Activated T-helper 1 cell treated with anti-CD3 and anti-CD28 coated beads, Interleukin-12 subunit alpha, Interleukin-12 subunit beta, Interleukin-2, Interleukin-4 antibody, amounts not matched to agents 30 ng/mL and 10 ng/mL and 1 ng/mL, durations not matched to agents 14 hours and 24 hours and 36 hours (primary cell): ENCODE measurements at regions of chr5 and their contacts with region 1.

Region 1: GRCh38 chr5:148383564-148384379 is at the start of gene FBXO38:
- DNase-seq: peak; percentile 95
- H3K4me3 Mint-ChIP-seq: peak within 1 kb of the TSS; percentile 94
- H3K27ac Mint-ChIP-seq: peak within 1 kb of the TSS; percentile 99
- H3K4me1 Mint-ChIP-seq: peaks cover 72% of the 10 kb centered on the region
- H3K27me3 Mint-ChIP-seq: no peaks in the 10 kb centered on the region
- total RNA-seq, gene FBXO38: 64.3 and 80.3 TPM in 2 replicates

Region 2: DNA sequence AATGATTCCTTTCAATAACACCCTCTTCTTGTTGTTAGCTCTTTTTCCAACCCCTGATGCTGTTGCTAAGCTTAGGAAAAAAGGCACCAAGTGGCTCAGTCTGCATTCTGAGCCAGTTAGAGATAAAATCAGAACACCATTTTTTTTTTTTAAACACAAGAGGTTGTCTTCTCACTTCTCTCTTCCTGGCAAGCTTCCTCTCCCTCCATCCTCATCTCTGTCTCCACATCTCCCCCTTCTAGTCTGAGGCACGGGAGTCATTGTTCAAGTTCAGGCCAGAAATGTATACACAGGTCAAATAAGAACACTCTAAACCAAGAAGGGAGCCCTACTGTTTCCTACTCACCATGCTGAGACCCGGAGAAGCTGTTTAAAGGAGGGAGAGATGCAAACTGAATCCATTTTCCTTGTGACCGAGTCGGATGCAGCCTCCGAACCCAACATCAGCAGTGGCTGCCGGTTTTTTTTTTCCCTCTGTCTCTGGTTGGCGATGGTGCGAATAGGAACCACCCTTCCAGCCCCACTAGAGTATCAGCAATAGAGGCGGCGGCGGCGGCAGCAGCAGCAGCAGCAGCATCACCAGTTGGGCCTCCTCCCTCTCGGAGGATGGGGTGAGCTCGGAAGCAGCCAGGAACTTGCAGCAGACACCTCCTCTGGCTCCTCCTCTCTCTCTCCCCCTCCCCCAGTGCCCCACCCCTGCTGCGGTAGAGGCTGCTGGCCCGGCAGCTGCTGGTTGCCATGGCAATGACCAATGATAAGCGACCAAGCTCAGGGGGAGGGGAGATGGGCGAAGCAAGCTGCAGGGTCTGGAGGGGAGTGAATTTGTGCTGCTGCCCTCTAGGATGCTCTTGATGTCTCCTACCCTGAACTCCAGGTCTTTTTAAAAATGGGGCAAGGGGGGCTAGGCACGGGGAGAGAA is 601.4 kb before region 1 on chr5 and contains the start of gene JAKMIP2:
- intact Hi-C with region 1: loop called (anchors 5 kb)
- DNase-seq: peak; percentile 83
- H3K4me3 Mint-ChIP-seq: peak within 1 kb of the TSS; percentile 87
- H3K27ac Mint-ChIP-seq: peak within 1 kb of the TSS; percentile 78
- H3K4me1 Mint-ChIP-seq: peaks cover 24% of the 10 kb centered on the region
- H3K27me3 Mint-ChIP-seq: peaks cover 13% of the 10 kb centered on the region
- total RNA-seq, gene JAKMIP2: 1.1 TPM in 2 replicates

Region 3: GRCh38 chr5:148163345-148163744 is 220.4 kb before region 1 on chr5:
- intact Hi-C with region 1: no loop called
- DNase-seq: no peak
- H3K4me3 Mint-ChIP-seq: no peak overlapping the region
- H3K27ac Mint-ChIP-seq: no peak overlapping the region
- H3K4me1 Mint-ChIP-seq: no peaks in the 10 kb centered on the region
- H3K27me3 Mint-ChIP-seq: peaks cover 1% of the 10 kb centered on the region

Region 4: DNA sequence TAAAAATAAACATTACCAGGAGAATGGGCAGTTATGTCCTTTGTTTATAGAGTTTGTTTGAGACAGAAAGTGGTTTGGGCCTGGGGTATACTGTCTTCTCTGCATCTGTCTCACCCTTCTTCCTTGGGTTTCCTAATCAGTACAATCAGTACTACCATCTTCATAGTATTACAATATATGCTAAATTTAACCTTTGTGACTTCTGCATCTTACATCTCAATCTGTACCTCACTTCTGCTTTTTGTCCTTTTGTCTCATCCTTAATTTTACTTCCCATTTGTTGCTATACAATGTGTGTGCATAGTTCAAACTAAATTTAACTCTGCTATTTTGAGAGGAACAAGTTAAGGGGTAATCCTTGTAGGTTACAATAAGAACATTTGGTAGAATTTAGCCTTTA is 19.6 kb after region 1 on chr5:
- intact Hi-C with region 1: loop called (anchors 1 kb)
- DNase-seq: no peak
- H3K4me3 Mint-ChIP-seq: no peak overlapping the region
- H3K27ac Mint-ChIP-seq: peak overlapping the region; percentile 23
- H3K4me1 Mint-ChIP-seq: peaks cover 34% of the 10 kb centered on the region
- H3K27me3 Mint-ChIP-seq: no peaks in the 10 kb centered on the region

Region 5: DNA sequence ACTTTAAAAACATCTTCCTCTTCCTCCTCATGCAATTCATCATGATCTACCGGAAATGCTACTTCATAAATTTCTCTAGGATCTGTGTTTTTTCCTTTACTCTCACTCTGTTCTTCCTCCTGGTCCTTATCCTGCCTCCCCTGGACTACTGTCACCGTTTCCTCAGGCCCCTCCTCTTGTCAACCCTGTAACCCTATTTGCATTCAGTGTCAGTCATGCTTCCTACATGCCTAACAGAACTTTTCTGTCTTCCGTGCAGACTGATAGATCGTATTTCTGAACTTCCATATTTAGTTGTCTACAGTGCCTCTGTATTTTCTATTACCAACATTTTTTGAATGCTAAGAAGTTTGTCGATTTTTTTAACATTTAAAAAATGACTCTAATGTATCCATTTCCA is 243.2 kb after region 1 on chr5:
- intact Hi-C with region 1: no loop called
- DNase-seq: no peak
- H3K4me3 Mint-ChIP-seq: no peak overlapping the region
- H3K27ac Mint-ChIP-seq: no peak overlapping the region
- H3K4me1 Mint-ChIP-seq: peaks cover 5% of the 10 kb centered on the region
- H3K27me3 Mint-ChIP-seq: peaks cover 19% of the 10 kb centered on the region

Region 6: DNA sequence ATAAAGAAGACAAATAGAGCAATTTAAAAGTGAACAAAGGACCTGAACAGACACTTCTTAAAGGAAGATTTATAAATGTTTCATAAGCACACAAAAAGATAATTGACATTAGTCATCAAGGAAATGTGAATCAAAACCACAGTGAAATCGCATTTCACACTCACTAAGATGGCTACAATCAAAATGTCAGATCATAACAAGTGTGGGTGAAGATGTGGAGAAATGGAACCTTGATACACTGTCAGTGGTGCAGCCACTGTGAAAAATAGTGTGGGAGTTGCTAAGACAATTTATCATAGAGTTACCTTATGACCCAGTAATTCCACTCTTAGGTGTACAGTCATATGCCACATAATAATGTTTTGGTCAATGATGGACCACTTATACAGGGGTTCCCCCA is 325.1 kb after region 1 on chr5:
- intact Hi-C with region 1: loop called (anchors 1 kb)
- DNase-seq: no peak
- H3K4me3 Mint-ChIP-seq: no peak overlapping the region
- H3K27ac Mint-ChIP-seq: no peak overlapping the region
- H3K4me1 Mint-ChIP-seq: peaks cover 8% of the 10 kb centered on the region
- H3K27me3 Mint-ChIP-seq: no peaks in the 10 kb centered on the region

Region 7: DNA sequence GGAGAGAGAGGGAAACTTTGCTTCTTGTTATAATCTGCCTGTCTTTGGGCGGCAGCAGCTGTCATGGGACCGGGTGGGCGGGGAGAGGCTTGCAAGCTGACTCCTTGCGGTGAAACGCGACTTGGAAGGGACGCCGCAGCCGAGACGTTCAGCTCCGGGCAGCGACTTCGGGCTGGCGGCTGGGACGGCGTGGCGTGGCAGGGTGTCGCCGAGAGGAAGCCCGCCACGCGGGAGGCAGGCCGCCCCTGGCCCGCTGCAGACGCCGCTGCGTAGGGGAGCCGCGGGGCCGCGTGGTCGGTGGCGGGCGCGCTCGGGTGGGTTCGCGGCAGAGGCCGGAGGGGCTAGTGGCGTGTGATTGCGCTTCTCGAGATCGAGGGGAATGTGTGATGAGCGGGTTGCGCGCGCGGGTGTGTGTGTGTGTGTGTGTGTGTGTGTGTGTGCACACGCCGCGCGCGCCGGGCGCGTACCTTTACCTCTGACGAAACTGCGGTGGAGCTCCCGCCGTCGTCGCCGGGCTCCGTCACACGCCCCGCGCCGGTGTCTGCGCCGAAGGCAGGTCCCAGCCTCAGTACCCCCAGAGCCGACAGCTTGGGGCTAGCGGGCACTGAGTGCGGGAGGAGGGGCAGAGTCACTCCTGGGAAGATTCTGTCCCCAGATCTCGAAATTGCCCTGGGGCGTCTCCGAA is 1348.0 kb after region 1 on chr5:
- intact Hi-C with region 1: loop called (anchors 10 kb)
- DNase-seq: peak; percentile 35
- H3K4me3 Mint-ChIP-seq: peak overlapping the region; percentile 86
- H3K27ac Mint-ChIP-seq: peak overlapping the region; percentile 40
- H3K4me1 Mint-ChIP-seq: peaks cover 5% of the 10 kb centered on the region
- H3K27me3 Mint-ChIP-seq: peaks cover 5% of the 10 kb centered on the region